Ovary (tissue), 10 donors: ENCODE measurements at regions of chr1 and their contacts with region 1.

Region 1: DNA sequence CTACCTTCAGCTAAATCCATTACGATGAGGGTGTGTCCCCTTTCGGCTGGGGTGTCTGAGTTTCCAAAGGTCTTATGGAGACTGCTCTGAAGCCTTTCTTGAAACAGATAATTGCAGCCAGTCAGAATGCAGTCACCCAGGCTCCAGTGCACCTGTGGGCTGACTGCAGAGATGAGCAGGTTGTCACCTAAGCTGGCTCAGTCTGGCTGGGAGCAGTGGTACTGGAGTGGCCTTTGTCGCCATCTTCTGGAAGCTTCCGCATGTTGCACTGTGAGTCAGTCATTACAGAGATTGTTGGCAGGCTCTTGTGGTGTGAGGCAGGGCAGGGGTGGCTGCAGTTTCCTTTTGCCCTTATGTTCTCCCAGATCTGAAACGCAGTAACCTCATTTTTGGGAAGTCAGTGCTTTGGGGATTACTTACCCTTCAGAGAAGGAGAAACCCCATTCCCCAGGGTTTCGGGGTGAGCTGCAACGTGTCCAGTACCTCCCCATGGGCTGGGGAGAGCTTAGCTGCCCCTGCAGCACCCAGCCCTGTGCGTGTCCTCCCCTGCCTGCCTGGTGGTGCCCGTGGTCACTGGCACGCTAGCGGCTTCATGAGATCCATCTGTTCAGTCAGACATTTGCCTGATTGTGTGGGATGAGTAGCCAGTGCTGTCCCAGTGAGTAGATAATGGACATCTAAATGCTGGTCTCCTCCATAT is 48.0 kb downstream of the SMYD2 start:
- DNase-seq: peak; percentile 63 to 84 (median 78)
- H3K4me3 ChIP-seq: no peak overlapping the region
- H3K27ac ChIP-seq: no peak overlapping the region
- H3K4me1 ChIP-seq: peaks cover 1% of the 10 kb centered on the region
- H3K27me3 ChIP-seq: no peaks in the 10 kb centered on the region
- CTCF ChIP-seq: peak; percentile 69 to 84 (median 78)
- EP300 ChIP-seq: no peak
- POLR2A ChIP-seq: no peak

Region 2: GRCh38 chr1:214584805-214585766 is 256.2 kb after region 1 on chr1:
- intact Hi-C with region 1: loop called in 3 of 4 experiments (anchors 2 to 10 kb)
- DNase-seq: no peak
- H3K4me3 ChIP-seq: no peak overlapping the region
- H3K27ac ChIP-seq: no peak overlapping the region
- H3K4me1 ChIP-seq: no peaks in the 10 kb centered on the region
- H3K27me3 ChIP-seq: no peaks in the 10 kb centered on the region
- CTCF ChIP-seq: peak in 2 of 3 donors; percentile 70 to 73
- EP300 ChIP-seq: no peak
- POLR2A ChIP-seq: no peak